ENCODE measurements at regions of chr3 and their contacts with region 1.

Region 1: DNA sequence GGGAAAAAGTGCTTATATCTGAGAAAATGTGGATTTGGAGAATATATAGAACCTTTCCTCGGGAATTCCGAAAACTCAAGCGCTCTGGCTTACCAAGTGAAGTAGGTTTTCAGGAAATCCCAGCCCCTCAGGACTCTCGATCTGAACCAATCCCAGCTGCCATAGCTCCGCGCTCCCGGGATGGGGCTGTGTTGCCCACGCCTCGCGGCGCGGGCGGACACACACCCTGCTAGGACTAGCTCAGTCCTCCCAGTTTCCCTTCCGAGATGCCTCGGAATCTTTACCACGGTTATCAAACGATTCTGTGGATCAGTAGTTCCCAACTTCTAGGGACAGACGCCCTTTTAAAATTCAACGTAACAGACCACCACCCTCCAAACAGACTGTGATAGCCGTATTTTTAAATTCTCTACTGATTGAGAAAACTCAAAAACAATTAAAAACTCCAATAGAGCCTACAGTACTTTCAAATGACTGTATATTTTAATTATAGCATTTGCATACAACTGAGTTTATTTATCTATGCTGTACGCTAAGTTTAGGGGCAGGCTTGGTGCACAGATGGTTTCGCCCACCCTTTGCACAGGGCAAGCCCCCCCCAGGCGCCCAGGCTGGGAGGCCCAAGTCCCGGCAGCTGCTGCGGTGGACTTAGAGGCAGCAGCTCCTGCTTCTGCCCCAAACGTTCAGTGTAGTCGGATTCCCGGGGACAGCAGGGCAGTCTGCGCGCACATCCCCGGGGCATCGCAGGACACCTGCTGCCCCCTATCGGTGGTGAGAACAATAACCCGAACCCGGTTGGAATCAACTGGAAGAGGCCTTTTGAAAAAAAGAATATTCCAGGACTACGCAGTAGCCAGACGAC is 52.3 kb downstream of the CCDC54 start:
- DNase-seq: no peak
- H3K4me3 ChIP-seq: peak overlapping the region; percentile 80 to 96 (median 87)
- H3K27ac ChIP-seq: peak overlapping the region; percentile 97 to 99 (median 97)
- H3K4me1 ChIP-seq: peaks cover 5 to 26% (median 18%) of the 10 kb centered on the region in 4 donors
- H3K27me3 ChIP-seq: no peaks in the 10 kb centered on the region
- CTCF ChIP-seq: peak; percentile 73 to 89 (median 88)
- EP300 ChIP-seq: no peak
- POLR2A ChIP-seq: no peak

Region 2: GRCh38 chr3:107271787-107272387 is 157.7 kb before region 1 on chr3:
- intact Hi-C with region 1: loop called (anchors 5 kb)
- DNase-seq: no peak
- H3K4me3 ChIP-seq: no peak overlapping the region
- H3K27ac ChIP-seq: no peak overlapping the region
- H3K4me1 ChIP-seq: peaks cover 0 to 6% (median 0%) of the 10 kb centered on the region in 4 donors
- H3K27me3 ChIP-seq: no peaks in the 10 kb centered on the region
- CTCF ChIP-seq: peak; percentile 62 to 74 (median 64)
- EP300 ChIP-seq: no peak
- POLR2A ChIP-seq: no peak

Region 3: GRCh38 chr3:107356706-107357105 is 72.8 kb before region 1 on chr3:
- intact Hi-C with region 1: no loop called
- DNase-seq: no peak
- H3K4me3 ChIP-seq: no peak overlapping the region
- H3K27ac ChIP-seq: no peak overlapping the region
- H3K4me1 ChIP-seq: no peaks in the 10 kb centered on the region
- H3K27me3 ChIP-seq: no peaks in the 10 kb centered on the region
- CTCF ChIP-seq: no peak
- EP300 ChIP-seq: no peak
- POLR2A ChIP-seq: no peak

Region 4: GRCh38 chr3:107465064-107465631 is 35.6 kb after region 1 on chr3:
- intact Hi-C with region 1: no loop called
- DNase-seq: no peak
- H3K4me3 ChIP-seq: no peak overlapping the region
- H3K27ac ChIP-seq: no peak overlapping the region
- H3K4me1 ChIP-seq: no peaks in the 10 kb centered on the region
- H3K27me3 ChIP-seq: no peaks in the 10 kb centered on the region
- CTCF ChIP-seq: no peak
- EP300 ChIP-seq: no peak
- POLR2A ChIP-seq: no peak

Region 5: DNA sequence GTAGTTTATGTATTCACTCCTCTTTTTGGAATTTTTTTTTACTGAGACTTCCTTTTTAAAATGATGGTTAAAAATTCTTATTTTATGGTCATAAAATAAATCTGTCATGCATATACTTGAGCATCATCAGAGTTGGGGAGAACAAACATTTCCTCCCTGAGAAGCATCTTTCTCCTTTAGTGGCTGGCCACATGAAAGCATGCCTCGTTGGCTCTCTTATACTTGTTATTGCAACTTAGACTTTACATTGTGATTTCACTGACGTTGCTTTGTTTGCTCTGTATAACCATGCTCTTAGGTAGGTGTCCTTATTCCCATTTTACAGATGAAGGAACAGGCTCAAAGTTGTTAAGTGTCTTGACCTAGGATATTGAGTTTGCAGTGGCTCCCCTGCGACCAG is 111.3 kb after region 1 on chr3:
- intact Hi-C with region 1: no loop called
- DNase-seq: no peak
- H3K4me3 ChIP-seq: no peak overlapping the region
- H3K27ac ChIP-seq: no peak overlapping the region
- H3K4me1 ChIP-seq: peaks cover 0 to 13% (median 8%) of the 10 kb centered on the region in 4 donors
- H3K27me3 ChIP-seq: no peaks in the 10 kb centered on the region
- CTCF ChIP-seq: no peak
- EP300 ChIP-seq: no peak
- POLR2A ChIP-seq: no peak